Colonic mucosa (tissue), 4 donors: ENCODE measurements at regions of chr18 and their contacts with region 1.

Region 1: GRCh38 chr18:56541793-56542192 is 96.6 kb downstream of the TXNL1 start:
- DNase-seq: no peak
- H3K4me3 ChIP-seq: no peak overlapping the region
- H3K27ac ChIP-seq: no peak overlapping the region
- H3K4me1 ChIP-seq: no peaks in the 10 kb centered on the region
- H3K27me3 ChIP-seq: no peaks in the 10 kb centered on the region
- CTCF ChIP-seq: no peak

Region 2: GRCh38 chr18:56168049-56168781 is 373.6 kb before region 1 on chr18:
- intact Hi-C with region 1: no loop called
- DNase-seq: no peak
- H3K4me3 ChIP-seq: no peak overlapping the region
- H3K27ac ChIP-seq: peak overlapping the region; percentile 60
- H3K4me1 ChIP-seq: no peaks in the 10 kb centered on the region
- H3K27me3 ChIP-seq: no peaks in the 10 kb centered on the region
- CTCF ChIP-seq: no peak

Region 3: GRCh38 chr18:56374007-56374655 is 167.7 kb before region 1 on chr18:
- intact Hi-C with region 1: no loop called
- DNase-seq: no peak
- H3K4me3 ChIP-seq: no peak overlapping the region
- H3K27ac ChIP-seq: no peak overlapping the region
- H3K4me1 ChIP-seq: no peaks in the 10 kb centered on the region
- H3K27me3 ChIP-seq: no peaks in the 10 kb centered on the region
- CTCF ChIP-seq: no peak

Region 4: DNA sequence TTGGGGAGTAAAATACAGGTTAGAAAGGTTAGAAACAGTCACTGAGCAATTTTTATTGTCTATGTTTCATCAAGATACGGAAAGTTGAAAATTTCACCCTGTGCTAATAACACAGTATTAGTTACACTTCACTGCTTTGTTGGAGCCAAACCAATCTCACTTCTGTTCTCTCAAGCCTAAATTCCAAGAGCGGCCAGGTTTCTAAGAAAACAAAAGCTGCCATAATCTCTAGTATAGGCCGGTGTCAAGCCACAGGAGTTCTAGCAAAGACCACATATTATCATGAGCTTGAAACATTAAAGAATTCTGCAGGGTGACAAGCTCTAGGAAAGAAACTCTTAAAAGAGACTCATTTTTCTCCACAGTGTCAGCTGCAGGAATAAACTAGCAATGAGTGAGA is 32.1 kb before region 1 on chr18:
- intact Hi-C with region 1: loop called (anchors 2 kb)
- DNase-seq: no peak
- H3K4me3 ChIP-seq: no peak overlapping the region
- H3K27ac ChIP-seq: no peak overlapping the region
- H3K4me1 ChIP-seq: no peaks in the 10 kb centered on the region
- H3K27me3 ChIP-seq: no peaks in the 10 kb centered on the region
- CTCF ChIP-seq: no peak